ENCODE measurements at regions of chr7 and their contacts with region 1.

Region 1: GRCh38 chr7:25158966-25159365 is 33.9 kb upstream of the CYCS start:
- DNase-seq: no peak
- ATAC-seq: no peak
- H3K4me3 ChIP-seq: no peak overlapping the region
- H3K27ac ChIP-seq: no peak overlapping the region
- H3K4me1 ChIP-seq: no peaks in the 10 kb centered on the region
- H3K27me3 ChIP-seq: no peaks in the 10 kb centered on the region
- CTCF ChIP-seq: no peak

Region 2: DNA sequence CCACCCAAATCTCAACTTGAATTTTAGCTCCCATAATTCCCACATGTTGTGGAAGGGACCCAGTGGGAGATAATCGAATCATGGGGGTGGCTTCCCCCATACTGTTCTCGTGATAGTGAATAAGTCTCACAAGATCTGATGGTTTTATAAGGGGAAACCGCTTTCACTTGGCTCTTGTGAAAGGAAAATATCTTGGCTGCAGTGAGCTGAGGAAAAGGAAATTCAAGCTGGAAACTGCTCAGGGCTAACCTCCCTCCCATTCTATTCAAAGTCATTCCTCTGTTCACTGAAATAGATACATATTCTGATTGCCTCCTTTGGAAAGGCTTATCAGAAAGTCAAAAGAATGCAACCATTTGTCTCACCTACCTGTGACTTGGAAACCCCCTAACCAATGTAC is 49.7 kb before region 1 on chr7:
- CTCF ChIA-PET with region 1: no interaction called
- POLR2A ChIA-PET with region 1: no interaction called
- intact Hi-C with region 1: no loop called
- DNase-seq: no peak
- ATAC-seq: no peak
- H3K4me3 ChIP-seq: no peak overlapping the region
- H3K27ac ChIP-seq: no peak overlapping the region
- H3K4me1 ChIP-seq: no peaks in the 10 kb centered on the region
- H3K27me3 ChIP-seq: no peaks in the 10 kb centered on the region
- CTCF ChIP-seq: no peak

Region 3: DNA sequence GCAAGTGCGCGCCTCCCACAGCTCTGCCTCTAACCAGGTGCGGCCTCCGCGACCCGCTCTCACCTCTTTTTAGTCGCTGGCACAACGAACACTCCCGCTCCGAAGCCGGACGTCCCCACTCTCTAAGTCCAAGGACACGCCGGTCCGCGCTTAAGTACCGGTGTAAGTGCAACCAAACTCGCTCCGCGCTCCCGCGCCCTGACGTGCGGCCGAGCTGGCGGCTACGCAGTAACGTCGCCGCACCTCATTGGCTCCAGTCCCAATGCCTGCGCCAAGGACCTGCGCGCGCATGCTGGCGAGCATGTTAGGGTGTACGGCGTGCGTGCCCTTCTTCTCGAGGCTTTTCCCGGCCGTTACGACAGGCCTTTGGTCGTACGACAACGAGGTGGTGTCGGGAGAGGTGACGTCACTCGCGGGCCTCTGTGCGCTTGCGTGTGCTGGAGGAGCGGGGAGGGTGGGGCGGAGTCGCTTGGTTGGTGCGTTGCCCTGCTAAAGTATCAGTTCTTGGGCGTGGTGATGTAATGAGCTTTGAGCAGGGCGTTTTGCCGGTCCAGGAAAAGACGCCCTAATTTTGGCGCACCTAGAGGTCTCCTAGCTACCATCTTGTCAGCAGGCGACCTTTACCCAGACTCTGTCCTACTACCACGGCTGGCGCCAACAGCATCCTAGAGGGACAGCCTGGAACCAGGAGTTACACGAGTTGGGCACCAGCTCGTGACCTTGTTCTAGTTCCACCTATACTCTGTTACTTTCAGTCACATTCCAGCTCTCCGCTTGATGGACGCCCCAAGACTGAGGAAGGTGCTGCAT is 33.6 kb before region 1 on chr7 and contains the start of gene CYCS:
- CTCF ChIA-PET with region 1: no interaction called
- POLR2A ChIA-PET with region 1: interaction called, 6 read pairs
- intact Hi-C with region 1: loop called (anchors 2 kb)
- DNase-seq: peak; percentile 100
- ATAC-seq: peak; percentile 92
- H3K4me3 ChIP-seq: peak within 1 kb of the TSS; percentile 100
- H3K27ac ChIP-seq: peak within 1 kb of the TSS; percentile 39; the same call in 1 of the 2 replicates
- H3K4me1 ChIP-seq: 0 out of 2 replicates have a peak, but pooled peaks cover 10% of the 10 kb centered on the region
- H3K27me3 ChIP-seq: no peaks in the 10 kb centered on the region
- CTCF ChIP-seq: no peak
- total RNA-seq, gene CYCS: 85.4 and 101 TPM in 2 replicates

Measured in PC-3 (cell line).